CD8-positive, alpha-beta T cell (primary cell): ENCODE measurements at regions of chr21 and their contacts with region 1.

Region 1: DNA sequence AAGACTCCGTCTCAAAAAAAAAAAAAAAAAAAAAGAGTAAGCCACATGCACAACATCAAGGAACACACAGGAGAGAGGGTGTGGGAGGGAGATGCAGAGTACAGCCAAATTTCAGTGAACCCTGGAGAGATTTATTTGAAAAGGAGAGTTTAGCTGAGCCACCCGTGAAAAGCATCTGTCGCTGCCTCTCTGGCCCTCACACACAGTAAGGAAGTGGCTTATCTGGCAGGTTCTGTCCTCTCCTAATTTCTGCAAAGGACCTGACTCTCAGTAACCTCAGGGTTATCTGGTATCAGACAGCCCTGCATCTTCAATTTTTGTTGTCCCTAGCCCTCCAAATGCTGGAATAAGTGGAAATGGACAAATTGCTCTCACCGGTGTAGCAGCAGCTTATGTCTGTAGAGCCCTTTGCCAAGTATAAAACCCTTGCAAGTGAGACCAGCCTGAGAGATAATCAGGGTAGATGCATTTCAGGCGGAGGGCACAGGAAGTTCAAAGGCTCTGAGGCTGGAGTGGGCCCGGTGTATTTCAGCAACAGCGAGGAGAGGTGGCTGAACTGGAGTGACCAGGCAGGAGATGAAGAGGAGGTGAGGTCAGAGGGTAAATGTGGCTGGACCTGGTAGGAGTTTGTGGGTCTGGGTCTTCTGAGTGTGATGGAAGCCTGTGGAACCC is 16.7 kb upstream of the IL10RB start:
- DNase-seq: peak in 1 of 9 experiments; percentile 11
- ATAC-seq: peak; percentile 40
- H3K4me3 ChIP-seq: no peak overlapping the region
- H3K4me3 Mint-ChIP-seq: no peak overlapping the region
- H3K27ac ChIP-seq: peak overlapping the region in 1 of 2 experiments; percentile 34
- H3K27ac Mint-ChIP-seq: peak overlapping the region; percentile 82
- H3K4me1 ChIP-seq: peaks cover 44% of the 10 kb centered on the region
- H3K4me1 Mint-ChIP-seq: peaks cover 56% of the 10 kb centered on the region
- H3K27me3 ChIP-seq: no peaks in the 10 kb centered on the region
- H3K27me3 Mint-ChIP-seq: no peaks in the 10 kb centered on the region
- CTCF ChIP-seq: no peak

Region 2: GRCh38 chr21:33212159-33212851 is 37.2 kb before region 1 on chr21:
- CTCF ChIA-PET with region 1: no interaction called
- POLR2A ChIA-PET with region 1: no interaction called
- intact Hi-C with region 1: no loop called
- DNase-seq: peak in 4 of 9 experiments; percentile 27 to 56 (median 32)
- ATAC-seq: peak; percentile 43
- H3K4me3 ChIP-seq: no peak overlapping the region
- H3K4me3 Mint-ChIP-seq: peak overlapping the region; percentile 65
- H3K27ac ChIP-seq: peak overlapping the region; percentile 11 to 48
- H3K27ac Mint-ChIP-seq: peak overlapping the region; percentile 92
- H3K4me1 ChIP-seq: peaks cover 86% of the 10 kb centered on the region
- H3K4me1 Mint-ChIP-seq: peaks cover 83% of the 10 kb centered on the region
- H3K27me3 ChIP-seq: no peaks in the 10 kb centered on the region
- H3K27me3 Mint-ChIP-seq: no peaks in the 10 kb centered on the region
- CTCF ChIP-seq: no peak

Region 3: GRCh38 chr21:33266050-33266788 is 16.8 kb after region 1 on chr21 and contains the start of gene IL10RB:
- CTCF ChIA-PET with region 1: no interaction called
- POLR2A ChIA-PET with region 1: no interaction called
- intact Hi-C with region 1: loop called in 1 of 2 experiments (anchors 1 kb)
- DNase-seq: peak; percentile 21 to 88 (median 72)
- ATAC-seq: peak; percentile 85
- H3K4me3 ChIP-seq: peak within 1 kb of the TSS; percentile 84 to 89
- H3K4me3 Mint-ChIP-seq: peak within 1 kb of the TSS; percentile 93
- H3K27ac ChIP-seq: peak within 1 kb of the TSS; percentile 70 to 75
- H3K27ac Mint-ChIP-seq: peak within 1 kb of the TSS; percentile 95
- H3K4me1 ChIP-seq: peaks cover 46% of the 10 kb centered on the region
- H3K4me1 Mint-ChIP-seq: peaks cover 66% of the 10 kb centered on the region
- H3K27me3 ChIP-seq: no peaks in the 10 kb centered on the region
- H3K27me3 Mint-ChIP-seq: no peaks in the 10 kb centered on the region
- CTCF ChIP-seq: no peak
- total RNA-seq, gene IL10RB: 7.4 to 8.2 TPM

Region 4: DNA sequence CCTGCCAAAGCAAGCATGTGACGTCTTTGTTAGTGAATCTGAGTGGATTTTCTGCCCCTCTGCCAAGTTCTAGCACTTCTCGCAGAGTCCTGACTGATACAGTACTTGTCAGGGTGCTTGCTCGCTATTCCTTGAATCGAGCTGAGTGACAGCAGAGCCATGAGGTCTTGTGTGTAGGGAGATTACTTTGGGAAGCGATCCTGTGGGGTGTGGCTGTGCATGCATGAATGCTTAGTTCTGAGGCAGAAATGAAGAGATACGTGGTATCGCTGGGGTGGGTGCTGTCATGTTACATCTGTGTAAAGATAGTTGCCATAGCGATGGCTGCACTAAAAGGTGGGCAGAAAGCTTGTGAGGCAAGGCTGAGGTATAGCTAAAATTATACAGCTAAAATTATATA is 261.4 kb after region 1 on chr21:
- CTCF ChIA-PET with region 1: no interaction called
- POLR2A ChIA-PET with region 1: no interaction called
- intact Hi-C with region 1: no loop called
- DNase-seq: no peak
- ATAC-seq: no peak
- H3K4me3 ChIP-seq: no peak overlapping the region
- H3K4me3 Mint-ChIP-seq: no peak overlapping the region
- H3K27ac ChIP-seq: no peak overlapping the region
- H3K27ac Mint-ChIP-seq: no peak overlapping the region
- H3K4me1 ChIP-seq: no peaks in the 10 kb centered on the region
- H3K4me1 Mint-ChIP-seq: no peaks in the 10 kb centered on the region
- H3K27me3 ChIP-seq: no peaks in the 10 kb centered on the region
- H3K27me3 Mint-ChIP-seq: no peaks in the 10 kb centered on the region
- CTCF ChIP-seq: no peak